ENCODE measurements at regions of chr15 and their contacts with region 1.

Region 1: DNA sequence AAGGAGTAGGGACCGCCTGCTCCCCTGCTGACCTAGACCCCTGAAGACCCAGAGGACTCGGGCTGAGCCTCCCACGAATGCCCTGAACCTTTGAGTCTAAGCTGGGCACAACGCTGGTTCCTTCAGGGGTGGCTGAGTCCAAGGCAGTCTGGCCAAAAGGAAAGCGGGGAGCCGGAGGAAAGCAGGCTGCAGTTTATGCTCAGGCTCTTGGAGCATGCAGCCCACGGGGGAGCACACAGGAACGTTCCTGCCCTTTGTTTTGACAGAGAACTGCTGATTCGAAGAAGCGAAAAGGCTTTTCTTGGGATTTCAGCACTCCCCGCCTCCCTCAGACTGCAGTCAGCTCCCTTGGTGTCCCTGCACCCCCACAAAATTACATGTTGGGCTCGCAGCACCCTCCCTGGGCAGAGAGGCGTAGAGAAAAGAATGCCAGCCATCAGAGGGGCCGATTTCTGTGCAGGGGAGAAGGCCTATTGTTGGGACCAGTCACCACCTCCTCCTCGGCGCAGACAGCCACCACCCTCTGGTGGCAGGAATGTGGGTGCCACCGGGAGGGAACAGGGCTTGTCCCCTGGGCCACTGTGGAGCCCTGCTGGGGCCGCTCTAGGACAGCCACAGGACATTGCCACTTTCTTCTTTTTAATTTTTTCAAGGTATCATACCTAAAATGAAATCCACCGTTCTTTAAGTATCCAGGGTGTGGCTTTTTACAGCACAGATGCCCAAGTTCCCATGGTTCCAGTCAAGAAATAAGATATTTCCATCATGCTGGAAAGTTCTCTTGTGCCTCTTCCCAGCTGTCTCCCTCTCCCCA is 72.2 kb downstream of the SMAD6 start:
- DNase-seq: peak; percentile 63
- ATAC-seq: peak; percentile 74
- H3K4me3 Mint-ChIP-seq: no peak overlapping the region
- H3K27ac Mint-ChIP-seq: no peak overlapping the region
- H3K4me1 Mint-ChIP-seq: no peaks in the 10 kb centered on the region
- H3K27me3 Mint-ChIP-seq: no peaks in the 10 kb centered on the region
- CTCF ChIP-seq: peak; percentile 62

Region 2: GRCh38 chr15:66603301-66604179 is 170.7 kb before region 1 on chr15:
- CTCF ChIA-PET with region 1: interaction called, 5 read pairs
- POLR2A ChIA-PET with region 1: no interaction called
- intact Hi-C with region 1: loop called (anchors 10 kb)
- DNase-seq: peak; percentile 72
- ATAC-seq: peak; percentile 80
- H3K4me3 Mint-ChIP-seq: no peak overlapping the region
- H3K27ac Mint-ChIP-seq: no peak overlapping the region
- H3K4me1 Mint-ChIP-seq: peaks cover 1% of the 10 kb centered on the region
- H3K27me3 Mint-ChIP-seq: no peaks in the 10 kb centered on the region
- CTCF ChIP-seq: peak; percentile 89

Measured in activated CD8-positive, alpha-beta T cell treated with anti-CD3 and anti-CD28 coated beads for 36 hours (primary cell).